CD8-positive, alpha-beta memory T cell (primary cell): ENCODE measurements at regions of chr1 and their contacts with region 1.

Region 1: GRCh38 chr1:23344111-23344986 is at the start of gene HNRNPR:
- DNase-seq: peak; percentile 96 to 99 (median 99)
- H3K4me3 ChIP-seq: peak within 1 kb of the TSS; percentile 81
- H3K4me3 Mint-ChIP-seq: peak within 1 kb of the TSS; percentile 87 to 97 (median 95)
- H3K27ac ChIP-seq: peak within 1 kb of the TSS; percentile 79
- H3K27ac Mint-ChIP-seq: peak within 1 kb of the TSS; percentile 90 to 98 (median 96)
- H3K4me1 ChIP-seq: peaks cover 35% of the 10 kb centered on the region
- H3K4me1 Mint-ChIP-seq: peaks cover 42 to 48% (median 48%) of the 10 kb centered on the region in 3 donors
- H3K27me3 ChIP-seq: no peaks in the 10 kb centered on the region
- H3K27me3 Mint-ChIP-seq: no peaks in the 10 kb centered on the region
- total RNA-seq, gene HNRNPR: 199 to 201 TPM

Region 2: DNA sequence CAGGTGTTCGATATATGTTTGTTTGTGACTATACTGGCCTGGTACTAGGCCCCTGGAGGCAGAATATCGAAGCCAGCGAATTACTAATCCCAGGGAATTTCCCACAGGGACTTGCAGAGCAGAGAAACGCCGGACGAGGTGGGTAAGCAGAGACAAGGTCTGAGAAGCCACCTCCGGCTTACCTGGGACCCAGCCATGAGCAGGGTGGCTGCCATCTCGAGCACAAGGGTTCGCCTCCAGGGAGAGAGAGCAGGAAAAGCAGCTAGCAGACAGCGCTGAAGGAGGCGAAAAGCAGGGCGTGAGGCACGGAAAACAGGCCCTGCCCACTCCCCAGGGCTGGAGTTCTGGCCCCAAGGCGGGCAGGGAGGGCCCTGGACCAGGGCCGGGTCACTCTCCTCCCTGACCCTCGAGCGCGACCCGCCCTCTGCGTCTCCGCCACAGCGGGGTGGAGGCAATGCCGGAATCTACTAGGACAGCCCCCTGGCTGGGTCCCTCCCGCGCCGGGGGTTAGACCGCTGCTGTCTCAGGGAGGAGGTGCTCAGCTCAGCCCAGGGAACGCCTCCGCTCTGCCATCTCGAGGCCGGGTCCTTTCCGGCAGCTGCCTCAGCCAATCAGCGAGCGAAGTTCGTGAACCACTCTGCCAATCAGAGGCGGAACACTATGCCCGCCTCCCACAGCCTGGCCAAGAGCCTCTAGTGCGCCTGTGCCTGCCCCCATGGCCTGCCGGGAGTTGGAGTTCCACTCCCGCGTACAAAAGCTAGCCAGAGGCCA is 23.6 kb after region 1 on chr1:
- CTCF ChIA-PET with region 1: interaction called, 4 read pairs
- POLR2A ChIA-PET with region 1: interaction called, 53 read pairs
- DNase-seq: peak; percentile 97 to 99 (median 97)
- H3K4me3 ChIP-seq: peak overlapping the region; percentile 100
- H3K4me3 Mint-ChIP-seq: peak overlapping the region; percentile 94 to 99 (median 99)
- H3K27ac ChIP-seq: peak overlapping the region; percentile 96
- H3K27ac Mint-ChIP-seq: peak overlapping the region; percentile 91 to 99 (median 98)
- H3K4me1 ChIP-seq: peaks cover 25% of the 10 kb centered on the region
- H3K4me1 Mint-ChIP-seq: peaks cover 32 to 36% (median 36%) of the 10 kb centered on the region in 3 donors
- H3K27me3 ChIP-seq: no peaks in the 10 kb centered on the region
- H3K27me3 Mint-ChIP-seq: peaks cover 0 to 1% of the 10 kb centered on the region in 2 donors